ENCODE measurements at regions of chr10 and their contacts with region 1.

Region 1: DNA sequence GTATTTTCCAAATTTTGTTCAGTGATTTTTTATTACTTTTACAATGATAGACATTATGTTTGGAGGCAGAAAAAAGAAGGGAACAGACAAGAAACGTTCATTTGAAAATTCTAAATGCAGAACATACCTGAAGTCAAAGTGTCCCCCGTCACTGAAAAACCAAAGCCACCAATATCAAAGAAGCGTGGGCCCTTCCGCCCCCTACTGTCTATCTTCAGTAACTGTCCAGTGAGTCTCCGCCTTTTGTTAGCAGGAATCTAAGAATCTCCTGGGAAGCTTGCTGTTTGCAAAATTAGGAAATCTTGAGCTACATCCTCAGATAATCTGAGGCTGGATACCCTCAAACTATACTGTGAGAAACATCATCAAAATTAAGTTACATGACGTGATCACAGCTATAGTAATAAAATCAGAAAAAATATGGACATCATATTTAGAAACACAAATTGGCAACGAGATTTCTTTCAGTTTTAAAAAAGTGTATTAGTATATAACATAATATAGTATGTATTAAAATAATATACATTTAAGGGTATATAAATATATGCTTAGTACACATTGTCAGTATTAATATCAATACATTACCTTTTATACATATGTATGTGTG is 169.3 kb upstream of the AKR1E2 start:
- DNase-seq: no peak
- ATAC-seq: peak; percentile 80
- H3K4me3 ChIP-seq: no peak overlapping the region
- H3K27ac ChIP-seq: no peak overlapping the region
- H3K4me1 ChIP-seq: peaks cover 0 to under 1% of the 10 kb centered on the region in 2 donors
- H3K27me3 ChIP-seq: no peaks in the 10 kb centered on the region

Region 2: DNA sequence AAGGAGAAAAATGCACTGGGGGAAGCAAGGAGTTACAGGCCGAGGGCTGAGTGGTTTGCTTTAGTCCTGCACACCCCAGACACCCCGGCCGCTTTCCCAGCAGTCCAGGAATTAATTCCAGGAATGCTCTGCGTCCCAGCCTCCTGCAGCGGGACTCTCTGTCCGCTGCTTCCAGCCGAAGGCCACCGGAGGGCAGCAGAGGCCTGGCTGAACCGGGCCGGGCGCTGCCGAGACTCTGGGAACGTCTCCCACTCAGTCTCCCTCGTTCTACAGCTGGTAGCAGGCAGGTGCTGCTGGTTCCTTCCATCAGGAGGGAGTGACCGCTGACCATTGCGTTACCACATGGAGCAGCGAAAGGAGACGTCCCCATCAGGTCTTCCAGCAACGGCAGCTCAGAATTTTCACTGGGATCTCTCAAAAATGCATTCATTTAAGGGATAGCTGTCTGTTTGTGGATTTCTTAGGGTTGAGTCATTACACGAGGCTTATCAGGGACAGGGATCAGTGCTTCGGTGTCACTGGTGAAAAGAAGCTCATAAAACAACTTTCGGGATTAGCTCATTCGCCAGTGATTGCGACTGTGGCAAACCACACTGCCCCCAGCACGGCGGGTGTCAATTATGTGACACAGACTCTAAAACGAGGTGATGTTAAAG is 1459.2 kb before region 1 on chr10:
- intact Hi-C with region 1: loop called (anchors 5 kb)
- DNase-seq: peak; percentile 87 to 94
- ATAC-seq: peak; percentile 94
- H3K4me3 ChIP-seq: no peak overlapping the region
- H3K27ac ChIP-seq: peak overlapping the region in 1 of 2 donors; percentile 22
- H3K4me1 ChIP-seq: no peaks in the 10 kb centered on the region
- H3K27me3 ChIP-seq: no peaks in the 10 kb centered on the region

Region 3: GRCh38 chr10:3239066-3239919 is 1417.4 kb before region 1 on chr10:
- intact Hi-C with region 1: loop called (anchors 10 kb)
- DNase-seq: peak; percentile 82 to 92
- ATAC-seq: peak; percentile 87
- H3K4me3 ChIP-seq: no peak overlapping the region
- H3K27ac ChIP-seq: no peak overlapping the region
- H3K4me1 ChIP-seq: no peaks in the 10 kb centered on the region
- H3K27me3 ChIP-seq: no peaks in the 10 kb centered on the region

Region 4: DNA sequence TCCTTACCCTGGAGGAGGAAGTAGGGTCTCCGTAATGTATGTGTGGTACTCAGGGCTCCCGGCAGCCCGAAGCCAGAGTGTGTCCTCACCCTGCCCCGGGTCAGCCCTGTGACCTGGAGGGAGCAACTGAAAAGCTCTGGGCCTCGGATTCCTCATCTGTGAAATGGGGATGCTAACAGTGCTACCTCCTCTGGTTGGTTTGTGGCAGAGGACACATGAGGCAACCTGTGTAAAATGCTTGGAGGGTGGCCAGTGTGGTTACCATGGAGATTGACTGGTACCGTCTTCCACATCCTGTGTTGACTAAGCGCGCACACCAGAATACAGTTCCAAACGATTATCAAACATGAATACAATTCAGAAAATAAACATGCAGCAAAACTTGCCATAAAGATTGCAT is 707.8 kb before region 1 on chr10:
- intact Hi-C with region 1: loop called in 1 of 2 experiments (anchors 10 kb)
- DNase-seq: peak in 1 of 2 donors; percentile 68
- ATAC-seq: peak; percentile 34
- H3K4me3 ChIP-seq: no peak overlapping the region
- H3K27ac ChIP-seq: no peak overlapping the region
- H3K4me1 ChIP-seq: peaks cover 0 to 6% of the 10 kb centered on the region in 2 donors
- H3K27me3 ChIP-seq: no peaks in the 10 kb centered on the region

Region 5: GRCh38 chr10:4081685-4082111 is 575.0 kb before region 1 on chr10:
- intact Hi-C with region 1: loop called in 1 of 2 experiments (anchors 10 kb)
- DNase-seq: peak in 1 of 2 donors; percentile 64
- ATAC-seq: peak; percentile 49
- H3K4me3 ChIP-seq: no peak overlapping the region
- H3K27ac ChIP-seq: peak overlapping the region in 1 of 2 donors; percentile 13
- H3K4me1 ChIP-seq: peaks cover 4 to 10% of the 10 kb centered on the region in 2 donors
- H3K27me3 ChIP-seq: no peaks in the 10 kb centered on the region

Region 6: DNA sequence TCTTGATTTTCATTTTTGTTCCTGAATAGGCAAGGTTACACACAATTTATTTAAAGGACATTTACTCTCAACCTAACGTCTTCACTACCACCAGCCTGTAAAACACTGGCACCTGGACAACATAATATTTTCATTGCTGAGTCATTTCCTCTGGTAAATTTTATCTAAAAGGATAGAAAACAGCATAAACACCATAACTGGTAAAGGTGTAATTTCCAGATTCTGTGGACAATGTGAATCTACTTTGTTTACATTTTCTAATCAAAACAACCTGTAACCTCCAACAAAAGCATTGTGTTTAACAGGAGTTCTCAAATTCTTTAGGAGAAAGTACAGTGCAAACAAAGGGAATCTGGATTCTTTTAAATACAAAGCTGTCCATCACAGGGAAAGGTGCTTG is 302.7 kb before region 1 on chr10:
- intact Hi-C with region 1: loop called (anchors 10 kb)
- DNase-seq: no peak
- ATAC-seq: peak; percentile 40
- H3K4me3 ChIP-seq: no peak overlapping the region
- H3K27ac ChIP-seq: peak overlapping the region in 1 of 2 donors; percentile 77
- H3K4me1 ChIP-seq: peaks cover 11 to 14% of the 10 kb centered on the region in 2 donors
- H3K27me3 ChIP-seq: no peaks in the 10 kb centered on the region

Region 7: DNA sequence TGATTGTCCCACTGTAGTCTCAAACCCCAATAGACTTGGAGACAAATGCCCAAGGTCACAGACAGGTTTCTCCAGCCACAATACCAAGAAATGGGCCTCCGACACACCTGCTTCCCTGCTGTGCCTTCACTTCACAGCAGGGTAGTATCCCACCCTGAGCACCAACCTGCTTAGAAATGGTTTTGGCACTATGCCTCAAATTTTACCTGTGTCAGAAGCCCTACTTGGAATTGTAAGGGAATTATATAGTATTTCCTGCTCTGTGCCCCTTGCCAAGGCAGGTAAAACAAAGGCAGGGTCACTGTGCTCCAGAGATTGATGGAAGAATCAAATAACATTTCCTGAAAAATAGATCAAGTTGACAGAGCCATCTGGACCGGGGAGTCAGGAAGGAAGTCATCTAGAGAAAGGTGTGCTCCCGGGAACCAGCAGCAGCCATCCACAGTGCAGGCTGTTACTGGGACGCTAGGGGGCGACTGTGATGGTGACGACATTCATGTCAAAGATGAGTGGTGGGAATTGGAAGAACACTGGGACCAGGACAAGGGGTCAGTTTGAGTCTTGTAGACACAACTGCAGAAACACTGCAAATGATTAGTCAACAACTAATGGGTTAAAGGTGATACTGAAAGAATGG is 51.6 kb after region 1 on chr10:
- intact Hi-C with region 1: no loop called
- DNase-seq: no peak
- ATAC-seq: no peak
- H3K4me3 ChIP-seq: no peak overlapping the region
- H3K27ac ChIP-seq: no peak overlapping the region
- H3K4me1 ChIP-seq: no peaks in the 10 kb centered on the region
- H3K27me3 ChIP-seq: no peaks in the 10 kb centered on the region

Measured in aorta (tissue), 5 donors.